ENCODE measurements at regions of chr10 and their contacts with region 1.

Region 1: GRCh38 chr10:50538555-50539398 is 85.0 kb downstream of the SGMS1 start:
- DNase-seq: no peak
- CTCF ChIP-seq: no peak

Region 2: DNA sequence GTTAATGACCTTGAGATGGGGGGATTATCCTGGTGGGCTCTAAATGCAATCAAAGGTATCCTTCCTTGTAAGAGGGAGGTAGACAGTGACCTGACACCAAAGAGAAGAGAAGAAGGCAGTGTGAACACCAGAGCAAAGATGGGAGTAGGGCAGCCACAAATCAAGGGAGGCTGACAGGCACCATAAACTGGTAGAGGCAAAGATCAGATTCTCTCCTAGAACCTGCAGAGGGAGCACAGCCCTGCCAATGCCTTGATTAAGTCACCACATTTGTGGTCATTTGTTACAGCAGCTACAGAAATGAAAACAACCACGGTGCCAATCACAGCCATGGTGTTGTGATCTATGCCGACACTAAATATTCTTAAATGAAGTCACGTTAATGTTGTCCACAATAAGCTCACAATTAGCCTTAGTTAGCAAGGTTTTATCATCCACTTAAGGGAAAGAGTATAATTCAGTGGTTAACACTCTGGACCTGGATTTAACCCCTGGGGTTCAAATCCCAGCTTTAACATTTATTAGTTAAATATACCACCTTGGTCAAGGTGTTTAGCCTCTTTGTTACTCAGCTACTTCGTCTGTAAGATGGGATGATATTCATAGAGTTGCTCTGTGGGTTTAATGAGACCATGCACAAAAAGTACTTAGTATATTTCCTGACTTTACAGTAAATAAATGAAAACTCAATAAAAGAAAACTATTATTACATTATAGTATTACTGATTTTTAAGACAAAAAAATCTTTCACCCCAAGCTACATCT is 14.2 kb after region 1 on chr10:
- CTCF ChIA-PET with region 1: interaction called, 12 read pairs
- POLR2A ChIA-PET with region 1: no interaction called
- DNase-seq: no peak
- CTCF ChIP-seq: no peak

Measured in GM10248 (cell line).